ENCODE measurements at regions of chr14 and their contacts with region 1.

Region 1: GRCh38 chr14:31038521-31039166 is 12.5 kb upstream of the STRN3 start:
- DNase-seq: no peak
- H3K4me3 ChIP-seq: no peak overlapping the region
- H3K27ac ChIP-seq: no peak overlapping the region
- H3K4me1 ChIP-seq: no peaks in the 10 kb centered on the region
- CTCF ChIP-seq: no peak

Region 2: DNA sequence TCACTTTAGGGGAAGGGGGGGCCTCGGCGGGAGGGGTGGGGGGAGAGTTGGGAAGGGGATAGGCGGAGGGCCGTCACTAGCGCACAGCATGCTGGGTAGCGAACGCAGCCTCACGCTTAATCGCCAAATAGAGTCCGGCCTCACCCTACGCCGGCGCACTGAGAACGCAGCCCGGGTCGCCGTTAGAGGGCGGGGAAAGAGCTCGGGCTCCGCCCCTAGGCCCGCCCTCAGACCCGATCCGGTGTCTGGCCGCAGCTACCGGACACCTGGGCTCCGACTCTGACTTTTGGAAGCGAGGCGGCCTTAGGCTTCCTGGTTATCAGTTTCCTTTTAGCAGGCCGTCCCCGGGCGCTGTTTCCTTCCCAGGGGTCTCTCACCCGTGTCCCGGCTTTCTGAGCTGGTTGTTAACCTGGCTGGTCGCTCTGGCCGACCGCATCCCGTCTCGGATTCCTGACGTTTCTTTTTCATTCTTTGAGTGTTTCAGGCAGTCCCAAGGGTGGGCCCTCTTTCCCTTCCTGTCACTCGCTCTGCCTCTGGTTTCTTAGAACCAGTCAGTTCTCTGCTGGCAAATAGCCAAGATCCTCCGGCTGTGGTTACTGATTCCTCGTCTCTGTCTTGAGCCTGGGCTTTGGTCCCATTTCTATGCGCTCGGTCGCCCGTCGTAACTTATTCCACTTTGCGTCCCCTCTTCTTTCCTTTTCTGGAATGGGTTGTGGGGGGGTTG is 12.1 kb before region 1 on chr14:
- CTCF ChIA-PET with region 1: no interaction called
- POLR2A ChIA-PET with region 1: interaction called, 11 read pairs
- intact Hi-C with region 1: no loop called
- DNase-seq: peak; percentile 95
- H3K4me3 ChIP-seq: peak overlapping the region; percentile 98
- H3K27ac ChIP-seq: peak overlapping the region; percentile 76
- H3K4me1 ChIP-seq: peaks cover 25% of the 10 kb centered on the region
- CTCF ChIP-seq: no peak